Transverse colon (tissue), 4 donors: ENCODE measurements at regions of chr10 and their contacts with region 1.

Region 1: DNA sequence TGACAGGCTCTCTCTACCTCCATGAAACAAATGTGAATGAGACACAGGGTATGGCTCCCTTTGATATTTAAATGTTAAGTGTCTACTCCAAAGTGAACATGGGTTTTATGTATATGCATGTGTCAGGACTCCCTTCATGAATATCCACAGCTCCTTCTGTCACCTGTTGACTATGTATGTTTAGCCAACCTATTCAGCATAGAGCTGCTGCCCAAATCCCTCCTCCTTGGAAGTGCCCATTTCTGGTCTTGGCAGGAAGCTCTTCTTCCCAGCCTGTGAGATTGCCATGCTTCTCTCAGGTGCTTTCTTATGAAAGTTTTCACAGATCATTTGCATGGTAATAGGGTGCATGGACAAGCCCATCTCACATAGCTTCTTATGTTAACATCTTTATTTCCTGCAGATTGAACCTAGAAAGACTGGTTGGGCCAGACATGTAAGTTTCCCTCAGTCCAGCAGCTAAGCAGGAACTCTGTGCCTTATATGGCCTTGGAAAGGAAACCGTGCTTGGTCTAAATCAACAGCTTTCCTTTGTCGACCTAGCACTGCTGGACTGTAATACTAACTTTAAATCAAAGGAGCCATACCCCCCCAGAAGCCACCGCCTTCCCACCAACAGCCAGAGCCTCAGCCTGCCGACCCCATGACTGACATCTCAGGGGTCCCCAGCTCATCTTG is 288.9 kb downstream of the ADARB2 start:
- DNase-seq: no peak
- H3K4me3 ChIP-seq: no peak overlapping the region
- H3K27ac ChIP-seq: no peak overlapping the region
- H3K4me1 ChIP-seq: no peaks in the 10 kb centered on the region
- H3K27me3 ChIP-seq: no peaks in the 10 kb centered on the region
- CTCF ChIP-seq: no peak
- EP300 ChIP-seq: no peak
- POLR2A ChIP-seq: no peak

Region 2: GRCh38 chr10:1416456-1417037 is 31.8 kb before region 1 on chr10:
- in situ Hi-C with region 1: no loop called
- intact Hi-C with region 1: loop called (anchors 1 kb)
- DNase-seq: no peak
- H3K4me3 ChIP-seq: no peak overlapping the region
- H3K27ac ChIP-seq: no peak overlapping the region
- H3K4me1 ChIP-seq: no peaks in the 10 kb centered on the region
- H3K27me3 ChIP-seq: peaks cover 35% of the 10 kb centered on the region
- CTCF ChIP-seq: no peak
- EP300 ChIP-seq: no peak
- POLR2A ChIP-seq: no peak

Region 3: GRCh38 chr10:1516492-1517165 is 68.2 kb after region 1 on chr10:
- in situ Hi-C with region 1: no loop called
- intact Hi-C with region 1: no loop called
- DNase-seq: no peak
- H3K4me3 ChIP-seq: no peak overlapping the region
- H3K27ac ChIP-seq: no peak overlapping the region
- H3K4me1 ChIP-seq: no peaks in the 10 kb centered on the region
- H3K27me3 ChIP-seq: peaks cover 9% of the 10 kb centered on the region
- CTCF ChIP-seq: no peak
- EP300 ChIP-seq: no peak
- POLR2A ChIP-seq: no peak